ENCODE measurements at regions of chr6 and their contacts with region 1.

Region 1: DNA sequence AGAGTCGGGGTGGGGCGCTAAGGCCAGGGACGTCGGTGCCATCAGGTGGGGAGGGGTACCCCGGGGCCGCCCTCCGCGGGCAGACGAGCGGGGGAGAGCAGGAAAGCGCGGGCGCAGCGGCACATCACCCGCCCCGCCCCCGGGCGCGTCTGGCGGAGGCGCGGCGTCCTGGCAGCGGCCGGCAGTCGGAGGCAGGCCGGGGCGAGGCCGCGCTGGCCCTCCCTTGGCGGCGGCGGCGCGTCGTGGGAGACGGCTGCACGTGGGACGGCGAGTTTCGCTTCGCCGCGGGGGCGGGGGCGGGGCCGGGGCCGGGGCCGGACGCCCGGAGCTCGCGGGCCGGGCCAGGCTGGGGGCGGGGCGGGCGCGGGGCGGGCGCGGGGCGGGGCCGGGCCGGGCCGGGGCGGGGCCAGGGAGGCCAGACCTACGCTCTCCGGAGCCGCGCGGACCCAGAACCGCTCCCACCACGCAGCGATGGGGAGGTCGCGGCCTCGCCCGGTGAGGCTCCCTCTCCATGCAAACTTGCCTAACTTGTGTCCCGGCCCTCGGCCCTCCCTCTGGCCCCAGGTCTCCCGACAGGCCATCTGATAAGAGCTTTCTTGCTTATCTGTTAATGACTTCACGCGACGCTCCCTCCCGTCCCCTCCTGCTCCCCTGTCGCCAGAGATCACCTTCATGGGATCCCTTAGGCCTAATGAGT is 12.5 kb downstream of the ITPR3 start:
- DNase-seq: peak; percentile 60 to 78
- ATAC-seq: peak; percentile 82 to 89 (median 86)
- H3K4me3 ChIP-seq: peak overlapping the region; percentile 48
- H3K4me3 Mint-ChIP-seq: peak overlapping the region; percentile 87
- H3K27ac ChIP-seq: peak overlapping the region; percentile 37
- H3K27ac Mint-ChIP-seq: peak overlapping the region; percentile 88 to 89
- H3K4me1 ChIP-seq: peaks cover 27% of the 10 kb centered on the region
- H3K4me1 Mint-ChIP-seq: peaks cover 53 to 60% of the 10 kb centered on the region in 2 donors
- H3K27me3 ChIP-seq: no peaks in the 10 kb centered on the region
- H3K27me3 Mint-ChIP-seq: no peaks in the 10 kb centered on the region
- CTCF ChIP-seq: no peak

Region 2: GRCh38 chr6:33620856-33621710 is 12.5 kb before region 1 on chr6 and contains the start of gene ITPR3:
- intact Hi-C with region 1: loop called (anchors 2 kb)
- DNase-seq: peak; percentile 56 to 91
- ATAC-seq: peak; percentile 58 to 75 (median 74)
- H3K4me3 ChIP-seq: peak within 1 kb of the TSS; percentile 95
- H3K4me3 Mint-ChIP-seq: peak within 1 kb of the TSS; percentile 95
- H3K27ac ChIP-seq: peak within 1 kb of the TSS; percentile 89
- H3K27ac Mint-ChIP-seq: peak within 1 kb of the TSS; percentile 85 to 94
- H3K4me1 ChIP-seq: peaks cover 55% of the 10 kb centered on the region
- H3K4me1 Mint-ChIP-seq: peaks cover 32 to 63% of the 10 kb centered on the region in 2 donors
- H3K27me3 ChIP-seq: no peaks in the 10 kb centered on the region
- H3K27me3 Mint-ChIP-seq: no peaks in the 10 kb centered on the region
- CTCF ChIP-seq: no peak
- total RNA-seq, gene ITPR3: 45.5 to 66.7 (median 46.0) TPM

Measured in natural killer cell (primary cell).